Right cardiac atrium (tissue), 5 donors: ENCODE measurements at regions of chr20 and their contacts with region 1.

Region 1: GRCh38 chr20:2162125-2162822 is 60.6 kb downstream of the STK35 start:
- DNase-seq: no peak
- ATAC-seq: peak in 1 of 2 donors; percentile 18
- H3K4me3 ChIP-seq: no peak overlapping the region
- H3K27ac ChIP-seq: no peak overlapping the region
- H3K4me1 ChIP-seq: no peaks in the 10 kb centered on the region
- H3K27me3 ChIP-seq: no peaks in the 10 kb centered on the region

Region 2: GRCh38 chr20:2086177-2086979 is 75.9 kb before region 1 on chr20:
- intact Hi-C with region 1: loop called in 2 of 4 experiments (anchors 5 to 10 kb)
- DNase-seq: no peak
- ATAC-seq: peak in 1 of 2 donors; percentile 41
- H3K4me3 ChIP-seq: no peak overlapping the region
- H3K27ac ChIP-seq: no peak overlapping the region
- H3K4me1 ChIP-seq: peaks cover 2% of the 10 kb centered on the region
- H3K27me3 ChIP-seq: no peaks in the 10 kb centered on the region

Region 3: DNA sequence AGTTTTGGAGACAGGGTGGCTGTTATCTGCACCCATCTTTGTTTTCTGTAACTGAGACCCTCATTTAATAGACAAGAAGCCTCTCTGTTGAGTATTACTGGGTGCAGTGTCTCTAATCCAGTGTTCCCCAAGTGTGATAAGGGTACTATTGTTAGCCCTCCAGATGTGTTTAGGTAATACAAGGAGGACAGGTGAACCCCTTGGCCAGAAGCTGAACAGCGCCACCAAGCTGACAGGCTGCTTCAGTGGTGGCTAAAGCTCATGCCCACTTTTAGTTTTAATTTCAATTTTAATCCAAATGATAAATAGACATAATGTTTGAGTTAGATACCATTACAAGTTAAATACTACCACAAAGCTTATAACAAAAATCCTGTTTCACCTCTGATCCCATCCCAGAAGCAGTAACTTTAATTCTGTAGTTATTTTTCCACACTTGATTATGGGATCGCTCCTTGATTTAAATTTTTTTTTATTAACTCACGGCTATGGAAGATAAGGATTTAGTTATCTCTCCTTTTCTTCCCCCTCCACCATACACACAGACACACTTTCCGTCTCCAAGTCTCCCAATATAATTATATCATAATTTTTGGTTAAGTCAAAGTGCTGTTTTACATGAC is 69.0 kb before region 1 on chr20:
- intact Hi-C with region 1: loop called in 2 of 4 experiments (anchors 5 to 10 kb)
- DNase-seq: no peak
- ATAC-seq: no peak
- H3K4me3 ChIP-seq: no peak overlapping the region
- H3K27ac ChIP-seq: no peak overlapping the region
- H3K4me1 ChIP-seq: no peaks in the 10 kb centered on the region
- H3K27me3 ChIP-seq: no peaks in the 10 kb centered on the region